AG04450 (cell line): ENCODE measurements at regions of chr12 and their contacts with region 1.

Region 1: GRCh38 chr12:15001733-15002382 is 29.0 kb downstream of the PDE6H start:
- DNase-seq: no peak
- H3K4me3 ChIP-seq: no peak overlapping the region
- H3K27ac ChIP-seq: no peak overlapping the region
- H3K27me3 ChIP-seq: no peaks in the 10 kb centered on the region
- CTCF ChIP-seq: no peak

Region 2: GRCh38 chr12:14845350-14845750 is 156.5 kb before region 1 on chr12:
- CTCF ChIA-PET with region 1: interaction called, 191 read pairs
- POLR2A ChIA-PET with region 1: no interaction called
- DNase-seq: peak; percentile 48
- H3K4me3 ChIP-seq: no peak overlapping the region
- H3K27ac ChIP-seq: no peak overlapping the region
- H3K27me3 ChIP-seq: no peaks in the 10 kb centered on the region
- CTCF ChIP-seq: peak; percentile 79

Region 3: GRCh38 chr12:14986449-14986848 is 15.4 kb before region 1 on chr12:
- CTCF ChIA-PET with region 1: no interaction called
- POLR2A ChIA-PET with region 1: interaction called, 13 read pairs
- DNase-seq: no peak
- H3K4me3 ChIP-seq: no peak overlapping the region
- H3K27ac ChIP-seq: no peak overlapping the region
- H3K27me3 ChIP-seq: no peaks in the 10 kb centered on the region
- CTCF ChIP-seq: no peak